RWPE1 (cell line): ENCODE measurements at regions of chr2 and their contacts with region 1.

Region 1: DNA sequence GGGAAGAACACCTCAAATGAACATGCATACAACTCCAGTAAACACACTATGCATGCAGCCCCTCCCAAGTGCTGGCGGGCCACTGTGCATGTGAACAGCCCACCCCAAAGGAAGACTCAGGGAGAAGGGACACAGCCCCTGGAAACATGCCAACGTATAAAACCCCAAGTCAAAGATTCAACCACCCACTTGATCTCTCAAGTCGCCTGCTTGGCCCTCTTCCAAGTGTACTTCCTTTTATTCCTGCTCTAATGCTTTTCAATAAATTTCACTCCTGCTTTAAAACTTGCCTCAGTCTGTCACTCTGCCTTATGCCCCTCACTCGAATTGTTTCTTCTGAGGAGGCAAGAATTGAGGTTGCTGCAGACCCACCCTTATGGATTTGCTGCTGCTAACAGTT is 139.1 kb downstream of the C1D start:
- DNase-seq: no peak
- H3K27ac ChIP-seq: no peak overlapping the region
- CTCF ChIP-seq: no peak

Region 2: DNA sequence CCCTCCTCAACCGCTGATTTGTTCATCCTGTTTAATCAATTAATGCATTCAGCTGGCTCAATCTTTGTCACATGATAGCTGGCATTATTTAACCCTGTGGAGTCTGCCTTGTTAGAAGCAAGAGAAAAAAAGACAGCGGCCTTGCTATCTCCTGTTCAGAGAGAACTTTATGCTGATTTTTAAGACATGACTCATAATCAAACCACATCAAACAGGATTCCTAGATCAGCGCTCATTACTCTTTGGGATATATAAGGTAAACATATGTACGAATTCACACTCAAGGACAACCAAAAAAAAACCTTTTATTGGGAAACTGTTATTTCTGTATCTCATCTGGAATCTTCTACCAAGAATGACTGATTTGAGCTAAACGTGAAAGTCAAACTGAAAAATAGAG is 56.0 kb before region 1 on chr2:
- CTCF ChIA-PET with region 1: no interaction called
- POLR2A ChIA-PET with region 1: no interaction called
- DNase-seq: peak; percentile 30
- H3K27ac ChIP-seq: no peak overlapping the region
- CTCF ChIP-seq: no peak

Region 3: GRCh38 chr2:68196120-68196716 is 272.5 kb after region 1 on chr2:
- CTCF ChIA-PET with region 1: no interaction called
- POLR2A ChIA-PET with region 1: interaction called, 11 read pairs
- DNase-seq: no peak
- H3K27ac ChIP-seq: no peak overlapping the region
- CTCF ChIP-seq: peak; percentile 34; the same call in 1 of the 2 replicates